Activated CD4-positive, alpha-beta T cell treated with anti-CD3 and anti-CD28 coated beads, Interleukin-2, amount 10 ng/mL, durations not matched to agents 24 days and 14 days (primary cell): ENCODE measurements at regions of chr2 and their contacts with region 1.

Region 1: DNA sequence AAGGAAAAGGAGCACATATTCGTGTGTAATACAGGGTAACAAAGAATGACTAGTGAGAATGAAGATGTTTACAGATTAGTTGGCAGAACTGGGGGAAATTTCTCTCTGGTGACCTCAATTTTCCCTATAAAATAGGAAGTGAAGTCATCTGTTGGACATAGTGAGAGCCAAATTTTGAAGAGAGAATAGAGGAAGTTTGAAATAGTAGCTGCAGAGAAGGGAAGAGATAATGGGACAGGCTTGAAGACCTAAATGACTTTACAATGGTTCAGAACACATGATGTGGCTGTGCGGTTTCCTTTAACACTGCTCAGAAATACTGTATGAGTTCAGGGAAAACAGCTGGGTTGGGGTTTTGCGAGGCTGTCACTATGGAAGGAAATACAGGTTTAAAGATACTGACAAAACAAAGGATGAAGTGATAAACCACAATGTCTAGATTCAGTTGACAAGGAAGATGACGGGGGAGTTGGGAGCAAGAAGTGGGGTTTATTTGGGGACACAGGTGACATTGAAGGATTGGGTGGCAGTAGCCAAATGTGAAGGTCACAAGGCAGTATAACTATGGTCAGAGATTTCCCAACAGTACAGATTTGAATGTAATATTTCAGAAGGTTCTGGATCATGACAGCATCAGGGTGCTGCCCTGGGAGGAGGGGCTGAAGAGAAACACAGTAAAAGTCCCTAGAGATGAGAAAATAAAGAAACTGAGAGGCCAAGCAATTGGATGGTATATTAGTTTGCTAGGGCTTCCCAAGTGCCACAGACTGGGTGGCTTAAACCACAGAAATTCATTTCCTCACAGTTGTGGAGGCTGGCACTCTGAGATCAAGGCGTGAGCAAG is 82.6 kb upstream of the TANK start:
- DNase-seq: peak; percentile 95
- H3K4me3 Mint-ChIP-seq: peak overlapping the region; percentile 40
- H3K27ac Mint-ChIP-seq: peak overlapping the region; percentile 90
- H3K4me1 Mint-ChIP-seq: peaks cover 50% of the 10 kb centered on the region
- H3K27me3 Mint-ChIP-seq: no peaks in the 10 kb centered on the region

Region 2: DNA sequence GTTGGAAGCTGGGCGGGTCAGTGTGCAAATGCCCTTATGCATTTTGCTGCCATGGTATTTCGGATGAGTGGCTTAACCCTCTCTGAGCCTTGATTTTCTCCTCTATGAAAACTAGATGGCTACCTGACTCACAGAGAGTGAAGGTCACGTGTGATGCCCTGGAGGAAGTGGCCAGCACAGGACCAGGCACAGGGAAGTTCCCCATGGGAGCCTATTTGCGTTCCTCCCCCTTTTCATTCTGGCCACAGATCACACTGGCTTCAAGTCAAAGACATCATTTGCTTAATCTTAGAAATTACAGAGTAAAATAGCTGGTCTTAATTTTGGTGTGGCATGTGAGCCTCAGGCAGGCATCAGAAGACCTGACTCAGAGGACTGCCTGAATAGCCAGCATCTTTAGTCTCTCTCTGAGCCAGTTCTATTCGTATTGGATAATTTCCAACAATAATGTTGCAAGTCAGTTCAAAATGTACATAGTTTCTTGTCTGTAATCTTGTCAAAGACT is 1222.0 kb before region 1 on chr2:
- intact Hi-C with region 1: no loop called
- DNase-seq: no peak
- H3K4me3 Mint-ChIP-seq: no peak overlapping the region
- H3K27ac Mint-ChIP-seq: no peak overlapping the region
- H3K4me1 Mint-ChIP-seq: peaks cover 2% of the 10 kb centered on the region
- H3K27me3 Mint-ChIP-seq: no peaks in the 10 kb centered on the region

Region 3: DNA sequence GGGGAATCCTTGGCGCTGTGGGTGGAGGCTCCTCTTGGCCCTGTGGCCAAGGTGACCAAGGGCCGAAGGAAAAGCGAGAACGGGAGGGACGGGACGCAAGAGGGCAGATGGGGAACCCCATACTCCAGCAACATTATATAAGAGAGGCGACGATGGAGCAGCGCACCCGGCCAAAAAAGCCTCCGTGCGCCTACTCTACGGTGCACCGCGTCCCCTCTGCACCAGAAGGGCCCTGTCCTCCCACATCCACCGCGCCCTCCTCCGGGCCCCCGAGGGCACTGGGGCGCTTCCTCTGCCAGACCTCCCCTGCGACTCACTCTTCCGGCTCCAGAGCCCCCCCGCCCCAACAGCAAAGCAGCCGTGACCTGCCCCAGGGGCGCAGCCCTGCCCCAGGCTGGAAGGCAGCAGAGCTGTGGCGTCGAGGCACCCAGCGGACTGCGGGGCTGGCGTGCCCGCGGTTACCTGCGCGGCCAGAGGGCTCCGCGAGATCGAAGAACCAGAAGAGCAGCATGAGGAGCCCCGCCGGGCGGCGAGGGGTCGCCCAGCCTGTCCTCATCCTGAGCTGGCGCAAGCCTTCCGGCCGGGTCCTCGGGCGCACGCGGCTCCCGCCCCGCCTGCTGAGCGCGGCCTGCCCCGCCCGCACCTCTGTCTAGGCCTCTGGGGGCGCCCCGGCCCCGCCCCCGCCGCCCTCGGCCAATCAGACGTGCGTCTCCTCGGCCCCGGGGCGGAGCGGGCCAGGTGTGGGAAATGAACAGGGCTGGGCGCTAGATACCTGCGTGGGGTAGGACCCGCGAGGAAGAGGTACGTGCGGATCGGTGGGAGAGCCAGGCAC is 1173.2 kb before region 1 on chr2:
- intact Hi-C with region 1: loop called (anchors 5 kb)
- DNase-seq: peak; percentile 93
- H3K4me3 Mint-ChIP-seq: peak within 1 kb of the TSS; percentile 98
- H3K27ac Mint-ChIP-seq: peak within 1 kb of the TSS; percentile 94
- H3K4me1 Mint-ChIP-seq: peaks cover 36% of the 10 kb centered on the region
- H3K27me3 Mint-ChIP-seq: no peaks in the 10 kb centered on the region

Region 4: GRCh38 chr2:160406591-160407392 is 670.8 kb before region 1 on chr2:
- intact Hi-C with region 1: loop called (anchors 5 kb)
- DNase-seq: peak; percentile 92
- H3K4me3 Mint-ChIP-seq: peak overlapping the region; percentile 98
- H3K27ac Mint-ChIP-seq: peak overlapping the region; percentile 89
- H3K4me1 Mint-ChIP-seq: peaks cover 69% of the 10 kb centered on the region
- H3K27me3 Mint-ChIP-seq: peaks cover 4% of the 10 kb centered on the region

Region 5: DNA sequence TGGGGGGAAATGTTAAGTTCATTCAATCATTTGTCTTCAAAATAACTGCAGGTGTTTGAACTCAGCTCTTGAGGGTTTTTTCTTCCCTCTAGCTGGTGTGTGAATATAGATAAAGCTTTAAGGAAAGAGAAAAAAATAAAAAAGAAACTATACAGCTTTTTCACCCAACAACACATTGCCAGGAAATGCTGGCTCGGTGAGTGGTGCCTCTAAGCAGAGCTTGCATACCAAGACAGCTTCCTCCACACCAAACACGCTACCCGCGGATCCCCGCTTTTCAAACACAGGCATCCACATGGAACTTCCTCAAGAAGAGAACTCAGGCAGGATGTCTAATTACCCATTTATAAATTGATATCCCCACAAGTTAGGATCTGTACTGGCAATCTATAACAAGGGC is 12.8 kb after region 1 on chr2:
- intact Hi-C with region 1: loop called (anchors 1 kb)
- DNase-seq: peak; percentile 88
- H3K4me3 Mint-ChIP-seq: peak overlapping the region; percentile 69
- H3K27ac Mint-ChIP-seq: peak overlapping the region; percentile 88
- H3K4me1 Mint-ChIP-seq: peaks cover 49% of the 10 kb centered on the region
- H3K27me3 Mint-ChIP-seq: no peaks in the 10 kb centered on the region

Region 6: DNA sequence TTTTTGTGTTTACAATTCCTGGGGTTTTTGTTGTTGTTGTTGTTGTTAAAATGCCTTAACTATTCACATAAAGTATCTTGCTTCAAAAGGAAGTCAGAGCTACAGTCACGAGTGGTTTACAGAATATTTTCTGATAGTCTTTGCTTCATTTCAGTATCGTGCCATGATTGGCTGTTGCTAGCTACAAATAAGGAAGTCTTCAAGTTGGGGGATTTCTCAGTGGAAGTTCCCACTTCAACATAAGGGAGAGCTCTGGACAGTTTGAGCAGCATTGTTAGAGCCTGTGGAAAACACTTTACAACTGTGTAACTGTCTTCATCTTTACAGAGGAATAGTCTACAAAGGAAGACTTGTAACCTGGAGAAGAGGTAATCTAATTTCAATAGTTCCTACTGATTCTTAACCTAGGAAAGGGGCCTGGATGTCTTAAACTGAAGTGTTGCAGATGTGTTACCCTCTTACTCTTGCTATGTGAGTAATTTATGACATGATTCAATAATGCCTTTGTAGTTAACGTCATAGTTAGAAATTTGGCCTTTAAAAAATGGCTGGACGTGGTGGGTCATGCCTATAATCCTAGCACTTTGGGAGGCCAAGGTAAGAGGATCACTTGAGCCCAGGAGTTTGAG is 59.2 kb after region 1 on chr2:
- intact Hi-C with region 1: loop called (anchors 1 kb)
- DNase-seq: peak; percentile 88
- H3K4me3 Mint-ChIP-seq: peak overlapping the region; percentile 89
- H3K27ac Mint-ChIP-seq: peak overlapping the region; percentile 96
- H3K4me1 Mint-ChIP-seq: peaks cover 39% of the 10 kb centered on the region
- H3K27me3 Mint-ChIP-seq: no peaks in the 10 kb centered on the region

Region 7: DNA sequence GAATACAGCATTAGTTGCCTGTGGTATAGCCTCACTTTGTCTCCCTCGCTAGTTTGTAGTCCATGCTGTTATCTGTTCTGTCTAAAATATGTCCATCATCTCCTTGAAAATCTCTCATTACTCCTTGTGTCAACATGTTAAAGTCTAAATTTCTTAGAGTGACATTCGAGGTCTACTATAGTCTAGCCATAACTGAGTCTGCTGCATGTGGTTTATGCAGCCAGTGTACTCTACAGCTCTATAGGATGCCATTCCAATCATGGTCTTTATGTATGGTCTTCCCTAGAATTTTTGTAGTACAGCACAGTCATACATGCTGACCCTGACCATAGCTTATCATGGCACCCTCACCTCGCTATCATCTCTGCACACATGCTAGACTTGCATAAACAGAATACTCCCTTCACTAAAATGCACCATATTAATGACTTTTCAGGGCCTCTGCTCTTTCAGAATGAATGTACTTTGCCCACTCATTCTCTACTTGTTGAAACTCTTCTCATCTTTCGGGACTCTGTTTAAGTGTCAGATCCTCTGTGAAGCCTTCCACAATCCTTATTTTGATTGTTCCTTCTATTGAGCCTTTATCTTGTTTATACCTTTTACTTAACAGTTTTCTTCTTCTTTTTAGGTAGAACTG is 95.4 kb after region 1 on chr2:
- intact Hi-C with region 1: loop called (anchors 1 kb)
- DNase-seq: no peak
- H3K4me3 Mint-ChIP-seq: peak overlapping the region; percentile 34
- H3K27ac Mint-ChIP-seq: peak overlapping the region; percentile 71
- H3K4me1 Mint-ChIP-seq: peaks cover 55% of the 10 kb centered on the region
- H3K27me3 Mint-ChIP-seq: no peaks in the 10 kb centered on the region

Region 8: GRCh38 chr2:161965994-161966393 is 888.4 kb after region 1 on chr2:
- intact Hi-C with region 1: loop called (anchors 5 kb)
- DNase-seq: no peak
- H3K4me3 Mint-ChIP-seq: no peak overlapping the region
- H3K27ac Mint-ChIP-seq: no peak overlapping the region
- H3K4me1 Mint-ChIP-seq: peaks cover 39% of the 10 kb centered on the region
- H3K27me3 Mint-ChIP-seq: no peaks in the 10 kb centered on the region